ENCODE measurements at regions of chr9 and their contacts with region 1.

Region 1: DNA sequence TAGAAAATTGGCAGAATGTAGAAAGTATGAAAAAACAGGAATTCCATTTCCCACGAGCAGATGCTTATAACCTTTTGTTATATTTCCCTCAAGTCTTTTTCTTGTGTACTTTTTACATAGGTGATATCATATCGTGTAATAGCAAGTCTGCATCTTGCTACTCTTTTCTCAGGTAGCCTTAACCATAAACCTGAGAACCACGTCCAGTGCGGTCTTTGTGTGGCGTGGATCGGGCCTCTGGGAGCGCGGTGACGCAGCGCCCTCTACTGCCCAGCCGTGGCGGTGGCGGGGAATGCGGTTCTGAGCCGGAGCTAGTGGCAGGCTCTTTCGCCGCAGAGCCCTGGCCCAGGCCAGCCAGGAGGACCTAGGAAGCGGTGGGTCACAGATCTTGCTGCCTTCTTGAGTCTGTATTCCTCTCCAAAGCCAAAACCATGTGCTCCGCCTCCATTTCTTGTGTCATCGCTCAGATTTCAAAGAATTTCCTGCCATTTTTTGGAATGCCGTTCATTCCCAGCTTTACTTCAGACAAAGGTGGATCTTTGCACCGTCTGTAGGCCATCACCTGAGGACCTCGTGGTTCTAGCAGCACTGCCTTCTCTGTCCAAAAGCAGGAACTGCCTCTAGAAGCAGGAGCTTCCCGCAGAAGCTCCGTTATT is 71.9 kb downstream of the MVB12B start:
- DNase-seq: peak; percentile 82
- H3K4me3 Mint-ChIP-seq: no peak overlapping the region
- H3K27ac Mint-ChIP-seq: no peak overlapping the region
- H3K4me1 Mint-ChIP-seq: peaks cover 37% of the 10 kb centered on the region
- H3K27me3 Mint-ChIP-seq: no peaks in the 10 kb centered on the region

Region 2: DNA sequence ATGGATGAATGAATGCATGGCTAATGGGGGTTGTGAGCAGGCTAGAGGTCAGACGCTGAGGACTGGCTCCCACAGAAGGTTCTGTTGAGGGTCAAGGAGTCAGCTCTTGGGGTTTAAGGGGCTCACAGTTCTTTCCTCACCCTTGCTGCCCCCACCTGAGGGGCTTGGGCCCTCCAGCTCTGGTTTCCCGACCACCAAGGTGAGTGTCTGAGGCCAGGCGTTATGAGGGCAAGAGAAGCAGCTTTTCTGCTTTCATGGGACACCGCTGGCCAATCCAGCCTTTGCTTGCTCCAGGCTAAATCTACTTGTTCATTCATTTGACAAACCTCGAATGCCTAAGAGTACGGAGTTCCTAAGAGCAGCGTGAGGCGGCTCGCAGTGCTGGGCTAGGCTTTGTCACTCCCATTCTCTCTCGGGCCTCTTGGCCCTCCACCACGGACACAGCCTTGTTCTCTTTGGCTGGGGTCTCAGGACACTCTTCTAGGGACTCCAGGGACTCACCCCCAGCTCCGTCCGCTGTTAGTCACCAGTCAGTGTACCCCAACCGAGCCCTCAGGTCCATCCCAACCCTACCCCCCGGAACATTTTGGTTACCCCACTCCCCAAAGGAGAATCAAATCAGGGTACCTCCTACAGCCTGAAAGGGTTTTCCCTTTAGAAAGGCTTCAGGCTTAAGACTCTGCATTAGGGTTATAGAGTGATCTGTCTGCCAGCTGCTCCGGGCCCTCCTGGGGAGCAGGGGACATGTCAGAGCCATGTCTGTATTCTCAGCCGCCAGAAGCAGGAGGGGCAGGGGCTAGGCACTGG is 282.0 kb before region 1 on chr9:
- CTCF ChIA-PET with region 1: no interaction called
- POLR2A ChIA-PET with region 1: no interaction called
- intact Hi-C with region 1: no loop called
- DNase-seq: no peak
- H3K4me3 Mint-ChIP-seq: no peak overlapping the region
- H3K27ac Mint-ChIP-seq: no peak overlapping the region
- H3K4me1 Mint-ChIP-seq: no peaks in the 10 kb centered on the region
- H3K27me3 Mint-ChIP-seq: peaks cover 14% of the 10 kb centered on the region

Region 3: DNA sequence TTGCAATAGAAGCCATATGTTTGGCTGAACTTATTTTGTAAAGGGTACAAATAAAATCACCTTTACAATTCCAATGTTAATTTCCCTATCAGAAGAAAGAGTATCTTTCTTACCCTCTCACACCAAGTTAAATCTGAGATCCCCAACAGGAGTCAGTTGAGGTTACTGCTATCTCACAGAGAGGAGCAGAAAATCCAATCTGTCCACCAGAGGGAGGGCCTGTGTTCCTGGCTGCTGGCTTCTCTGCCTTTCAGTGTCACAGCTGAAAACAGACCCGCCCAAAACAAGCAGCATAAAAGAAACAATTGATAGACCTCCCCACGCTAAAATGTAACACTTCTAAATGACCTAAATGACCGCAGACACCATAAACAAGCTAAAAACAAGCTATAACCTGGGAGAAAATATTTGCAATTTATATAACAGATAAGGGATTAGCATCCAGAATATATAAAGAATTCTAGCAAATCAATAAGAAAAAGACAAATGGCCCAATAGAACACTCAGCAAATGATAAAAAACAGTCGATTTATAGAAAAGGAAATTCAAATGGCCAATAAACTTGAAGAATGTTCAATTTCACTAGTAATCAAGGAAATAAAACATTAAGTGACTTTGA is 96.4 kb before region 1 on chr9:
- CTCF ChIA-PET with region 1: interaction called, 62 read pairs
- POLR2A ChIA-PET with region 1: no interaction called
- intact Hi-C with region 1: loop called (anchors 2 kb)
- DNase-seq: peak; percentile 50
- H3K4me3 Mint-ChIP-seq: no peak overlapping the region
- H3K27ac Mint-ChIP-seq: no peak overlapping the region
- H3K4me1 Mint-ChIP-seq: peaks cover 2% of the 10 kb centered on the region
- H3K27me3 Mint-ChIP-seq: no peaks in the 10 kb centered on the region

Region 4: GRCh38 chr9:126326228-126327005 is 72.1 kb before region 1 on chr9 and contains the start of gene MVB12B:
- CTCF ChIA-PET with region 1: interaction called, 8 read pairs
- POLR2A ChIA-PET with region 1: no interaction called
- intact Hi-C with region 1: loop called (anchors 5 kb)
- DNase-seq: peak; percentile 45
- H3K4me3 Mint-ChIP-seq: peak within 1 kb of the TSS; percentile 60
- H3K27ac Mint-ChIP-seq: no peak within 1 kb of the TSS
- H3K4me1 Mint-ChIP-seq: peaks cover 16% of the 10 kb centered on the region
- H3K27me3 Mint-ChIP-seq: peaks cover 3% of the 10 kb centered on the region
- total RNA-seq, gene MVB12B: 1.1 to 1.4 TPM

Region 5: DNA sequence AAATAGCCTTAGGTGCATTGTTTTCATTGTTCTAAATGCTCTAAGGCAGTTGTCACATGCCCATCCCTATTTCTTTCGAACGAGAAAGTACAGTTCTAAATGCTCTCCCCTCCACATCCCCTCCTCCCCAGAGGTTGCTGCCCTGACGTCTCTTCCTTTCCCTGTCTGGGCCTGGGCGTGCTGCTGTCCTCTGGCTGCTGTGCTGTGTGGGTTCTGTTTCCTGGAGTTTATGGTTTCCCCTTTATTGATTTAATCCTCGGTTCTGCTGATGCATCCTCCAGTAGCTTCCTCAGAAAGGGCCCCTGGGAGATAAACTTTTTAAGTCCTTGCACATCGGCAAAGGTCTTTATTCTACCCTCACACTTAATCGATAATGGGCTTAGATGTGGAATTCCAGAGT is 23.1 kb before region 1 on chr9:
- CTCF ChIA-PET with region 1: no interaction called
- POLR2A ChIA-PET with region 1: no interaction called
- intact Hi-C with region 1: no loop called
- DNase-seq: no peak
- H3K4me3 Mint-ChIP-seq: no peak overlapping the region
- H3K27ac Mint-ChIP-seq: no peak overlapping the region
- H3K4me1 Mint-ChIP-seq: peaks cover 8% of the 10 kb centered on the region
- H3K27me3 Mint-ChIP-seq: no peaks in the 10 kb centered on the region

Region 6: DNA sequence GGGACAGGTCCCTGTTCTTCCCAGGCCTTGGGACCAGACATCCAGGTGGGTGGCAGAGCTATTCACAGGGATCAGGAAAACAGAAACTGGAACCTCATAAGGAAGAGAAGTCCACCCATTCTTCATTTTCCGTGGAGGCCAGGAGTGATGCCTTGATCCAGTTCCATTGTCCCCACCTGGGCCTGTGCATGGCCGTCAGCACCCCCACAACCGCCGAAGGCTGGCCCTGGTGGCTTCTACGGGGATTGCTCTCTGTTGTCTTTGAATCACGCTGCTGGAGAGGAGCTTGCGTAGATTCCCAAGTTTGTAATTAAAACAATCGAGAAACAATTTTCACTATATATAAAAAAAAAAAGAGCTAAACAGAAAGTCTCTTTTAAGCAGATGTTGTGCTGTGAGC is 62.5 kb after region 1 on chr9:
- CTCF ChIA-PET with region 1: interaction called, 14 read pairs
- POLR2A ChIA-PET with region 1: no interaction called
- intact Hi-C with region 1: no loop called
- DNase-seq: no peak
- H3K4me3 Mint-ChIP-seq: no peak overlapping the region
- H3K27ac Mint-ChIP-seq: no peak overlapping the region
- H3K4me1 Mint-ChIP-seq: no peaks in the 10 kb centered on the region
- H3K27me3 Mint-ChIP-seq: no peaks in the 10 kb centered on the region

Region 7: DNA sequence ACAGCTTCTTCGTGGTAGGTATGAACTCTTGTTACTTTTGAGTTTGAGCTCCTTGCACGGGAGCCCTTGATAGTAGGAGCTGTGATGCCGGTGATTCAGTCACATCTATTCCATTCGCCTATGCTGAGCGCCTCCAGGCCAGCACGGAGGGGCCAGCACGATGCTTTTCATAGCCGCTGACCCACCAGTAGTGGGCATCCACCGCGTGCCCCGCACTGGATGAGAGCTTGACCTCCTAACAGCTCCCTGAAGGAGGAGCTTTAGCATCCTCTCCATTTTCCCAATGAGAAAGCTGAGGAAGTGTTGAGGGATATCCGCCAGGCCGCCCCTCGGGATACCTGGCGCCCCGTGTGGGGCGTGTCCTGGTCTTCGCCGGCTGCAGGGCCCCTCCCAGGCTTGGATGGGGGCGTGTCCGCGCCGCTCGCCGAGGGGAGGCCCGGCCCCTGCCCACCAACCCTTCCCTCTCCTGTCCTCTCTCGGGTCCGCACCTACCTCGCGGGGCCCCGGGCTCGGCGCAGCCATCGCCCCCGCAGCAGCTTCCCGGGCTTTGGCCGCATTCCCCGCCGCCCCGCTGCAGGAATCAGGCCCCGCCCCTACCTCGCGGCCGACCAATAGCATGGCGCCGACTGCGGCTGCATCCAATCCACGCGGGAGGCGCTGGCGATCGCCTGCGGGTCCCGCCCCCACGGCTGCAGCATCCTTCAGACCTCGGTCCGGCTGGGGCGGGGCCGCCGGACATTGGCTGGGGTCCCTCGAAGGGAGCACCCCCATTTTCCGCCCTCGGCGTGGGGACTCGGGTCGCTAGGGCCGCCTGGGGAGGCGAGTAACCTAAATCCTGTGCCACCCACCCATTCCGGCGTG is 1531.9 kb after region 1 on chr9 and contains the start of gene PIP5KL1:
- CTCF ChIA-PET with region 1: no interaction called
- POLR2A ChIA-PET with region 1: no interaction called
- intact Hi-C with region 1: no loop called
- DNase-seq: peak; percentile 79
- H3K4me3 Mint-ChIP-seq: peak within 1 kb of the TSS; percentile 48
- H3K27ac Mint-ChIP-seq: no peak within 1 kb of the TSS
- H3K4me1 Mint-ChIP-seq: peaks cover 32% of the 10 kb centered on the region
- H3K27me3 Mint-ChIP-seq: peaks cover 1% of the 10 kb centered on the region
- total RNA-seq, gene PIP5KL1: 0.94 to 2.9 TPM